ENCODE measurements at regions of chr1 and their contacts with region 1.

Region 1: GRCh38 chr1:27392096-27392777 is at the start of gene GPR3:
- DNase-seq: peak; percentile 94
- CTCF ChIP-seq: peak; percentile 57

Region 2: DNA sequence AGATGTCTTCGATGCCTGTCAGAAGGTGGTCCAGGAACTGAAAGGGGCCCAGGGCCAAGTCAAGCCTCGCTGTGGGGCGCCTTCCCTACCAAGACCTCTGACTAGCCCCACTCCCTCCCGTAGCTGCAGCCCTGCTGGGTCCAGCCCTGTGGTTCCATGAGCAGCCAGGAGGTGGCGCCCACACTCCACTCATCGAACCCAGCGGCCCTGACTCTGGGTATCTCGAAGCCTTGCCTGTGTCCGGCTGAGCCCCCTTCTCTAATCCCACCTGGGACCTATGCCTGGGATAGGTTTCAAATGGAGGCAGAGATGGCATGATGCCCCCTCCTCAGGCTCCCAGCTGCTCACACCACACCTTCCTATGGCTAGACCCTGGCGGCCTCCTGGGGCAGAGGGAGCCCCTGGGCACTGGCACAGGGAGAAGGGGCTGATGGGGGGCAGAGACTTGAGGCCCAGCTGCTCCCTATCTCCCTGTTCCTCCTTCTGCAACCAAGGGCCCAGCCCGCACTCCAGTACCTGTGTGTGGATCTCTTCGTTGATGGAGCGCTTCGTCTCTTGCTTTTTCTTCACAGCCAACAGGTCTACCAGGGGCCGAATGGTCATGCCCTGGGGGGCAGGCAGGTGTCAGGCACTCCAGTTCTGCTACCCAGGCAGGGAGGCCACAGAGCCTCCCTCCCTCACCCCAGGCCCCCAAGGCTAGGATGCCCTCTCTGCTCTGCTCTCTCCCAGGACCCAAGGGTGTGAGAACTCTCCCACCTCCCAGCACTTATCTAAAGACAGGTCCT is 289.3 kb before region 1 on chr1:
- CTCF ChIA-PET with region 1: interaction called, 26 read pairs
- POLR2A ChIA-PET with region 1: no interaction called
- DNase-seq: peak; percentile 87
- CTCF ChIP-seq: peak; percentile 99

Region 3: GRCh38 chr1:27135541-27136240 is 256.5 kb before region 1 on chr1:
- CTCF ChIA-PET with region 1: no interaction called
- POLR2A ChIA-PET with region 1: no interaction called
- DNase-seq: no peak
- CTCF ChIP-seq: peak; percentile 23

Region 4: DNA sequence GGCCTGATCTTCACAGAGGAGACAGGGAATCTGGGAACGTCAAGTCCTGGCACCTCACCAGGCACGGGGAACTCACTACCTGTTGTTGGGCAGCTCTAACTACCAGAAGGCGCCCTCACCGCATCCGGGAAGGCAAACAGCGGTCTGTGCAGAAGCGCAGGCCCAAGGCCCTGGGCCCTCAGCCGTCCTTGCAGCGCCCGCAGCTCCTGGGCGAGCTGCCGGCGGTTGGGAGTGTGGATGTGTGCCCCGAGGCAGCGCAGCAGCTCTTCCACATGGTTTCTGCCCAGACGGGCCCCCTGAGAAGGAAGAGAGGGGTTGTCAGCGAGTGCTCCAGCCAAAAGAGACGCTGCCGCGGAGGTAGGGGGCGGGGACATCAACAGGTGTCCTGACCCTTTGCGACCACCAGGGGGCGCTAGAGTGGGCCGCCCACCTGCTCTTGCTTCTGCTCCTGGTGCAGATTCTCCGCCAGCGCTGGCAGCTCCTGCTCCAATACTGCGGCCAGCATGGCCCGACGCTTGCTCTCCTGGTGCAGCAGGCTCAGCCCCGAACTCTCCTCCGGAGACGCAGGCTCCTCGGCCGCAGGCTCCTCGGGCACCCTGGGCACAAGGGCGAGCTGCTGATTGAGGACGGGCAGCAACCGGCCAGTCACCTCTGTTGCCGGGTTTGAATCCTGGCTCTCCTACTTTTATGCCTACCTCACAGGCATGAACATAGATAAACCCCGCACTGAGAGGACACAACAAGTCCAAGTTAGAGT is 34.8 kb before region 1 on chr1:
- CTCF ChIA-PET with region 1: interaction called, 66 read pairs
- POLR2A ChIA-PET with region 1: no interaction called
- DNase-seq: peak; percentile 93
- CTCF ChIP-seq: peak; percentile 97

Region 5: GRCh38 chr1:27377760-27378495 is 14.3 kb before region 1 on chr1:
- CTCF ChIA-PET with region 1: interaction called, 11 read pairs
- POLR2A ChIA-PET with region 1: no interaction called
- DNase-seq: no peak
- CTCF ChIP-seq: no peak

Region 6: DNA sequence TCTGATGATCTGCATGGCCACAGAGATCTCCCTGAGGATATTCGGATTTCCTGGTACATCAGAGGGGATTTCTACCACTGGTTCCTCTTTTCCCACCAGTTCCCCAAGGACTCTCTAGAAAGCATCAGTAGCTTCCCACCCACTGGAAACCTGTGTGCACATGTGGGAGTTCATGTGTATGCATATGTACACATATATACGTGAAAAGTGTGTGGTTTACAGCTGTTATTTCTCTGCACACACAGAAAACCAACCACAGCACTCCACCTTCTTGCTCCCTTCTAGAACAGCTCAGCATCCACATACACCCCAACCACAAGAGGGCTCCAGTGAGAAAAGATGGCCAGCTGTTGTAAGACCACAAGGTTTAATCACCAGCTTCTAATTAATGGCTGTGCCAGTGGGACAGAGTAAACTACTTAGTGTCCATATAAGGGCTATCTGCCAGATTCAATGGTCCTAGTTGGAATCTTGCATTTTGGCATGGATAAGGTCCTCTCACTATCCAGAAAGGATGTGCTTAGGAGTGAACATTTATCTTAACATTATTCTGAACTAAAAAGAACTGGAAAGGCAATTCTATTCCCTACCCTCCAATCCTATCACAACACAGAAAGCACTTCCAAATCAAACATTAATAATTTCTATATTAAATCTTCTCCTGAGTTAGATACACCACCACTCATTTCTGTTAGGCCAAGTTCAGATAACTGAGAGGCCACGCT is 24.3 kb after region 1 on chr1:
- CTCF ChIA-PET with region 1: interaction called, 30 read pairs
- POLR2A ChIA-PET with region 1: no interaction called
- DNase-seq: no peak
- CTCF ChIP-seq: peak; percentile 64

Region 7: DNA sequence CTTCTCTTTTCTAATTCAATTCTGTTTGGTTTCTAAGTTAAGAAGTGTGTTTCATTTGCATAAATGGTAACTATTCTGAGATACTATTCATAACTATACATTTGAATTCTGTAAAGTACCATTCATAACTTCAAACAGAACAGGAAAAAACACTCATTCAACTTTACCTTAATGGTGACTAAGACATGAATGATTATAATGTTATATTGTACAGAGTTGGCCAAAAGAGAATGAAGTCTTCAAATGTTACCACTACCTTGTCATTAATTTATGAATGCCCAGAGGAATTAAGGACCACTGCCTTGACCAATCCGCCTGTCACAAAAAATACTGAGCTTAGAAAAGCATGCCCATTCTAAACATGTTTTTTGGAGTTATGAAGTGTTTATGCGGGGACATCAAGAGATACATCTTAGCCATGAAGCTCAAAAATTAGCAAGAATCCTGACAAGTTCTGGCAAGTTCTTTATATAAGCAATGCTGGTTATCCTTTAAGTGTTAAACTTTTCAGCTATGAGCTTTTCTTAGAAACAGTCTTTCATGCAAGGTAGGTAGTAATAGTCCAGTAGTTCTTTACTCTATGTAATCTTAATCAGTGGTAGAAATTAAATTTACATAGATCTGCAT is 89.9 kb after region 1 on chr1:
- CTCF ChIA-PET with region 1: no interaction called
- POLR2A ChIA-PET with region 1: no interaction called
- DNase-seq: no peak
- CTCF ChIP-seq: no peak

Measured in GM10248 (cell line).